B cell (primary cell): ENCODE measurements at regions of chr22 and their contacts with region 1.

Region 1: DNA sequence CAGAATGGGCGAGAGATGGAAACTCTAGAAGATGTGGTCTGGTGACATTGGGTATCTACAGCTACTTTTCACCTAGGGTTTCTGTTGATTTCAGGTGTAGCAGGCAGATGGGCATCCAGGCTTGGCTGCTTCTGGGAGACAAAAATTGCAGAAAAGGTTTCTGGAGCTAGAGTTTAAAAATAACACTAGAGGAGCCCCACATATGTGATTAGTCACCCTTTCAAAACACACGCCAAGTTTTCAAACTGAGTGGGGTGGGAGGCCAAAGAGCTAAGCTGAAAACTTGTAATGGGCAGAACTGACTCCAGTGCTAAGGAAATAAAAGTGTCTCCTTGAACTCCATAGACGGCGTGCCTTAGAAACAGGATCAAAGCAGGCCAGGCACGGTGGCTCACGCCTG is 80.8 kb downstream of the GRK3 start:
- DNase-seq: no peak
- ATAC-seq: no peak
- H3K4me3 ChIP-seq: no peak overlapping the region
- H3K4me3 Mint-ChIP-seq: no peak overlapping the region
- H3K27ac ChIP-seq: peak overlapping the region in 1 of 2 donors; percentile 21
- H3K27ac Mint-ChIP-seq: peak overlapping the region; percentile 32
- H3K4me1 ChIP-seq: peaks cover 30 to 39% of the 10 kb centered on the region in 2 donors
- H3K4me1 Mint-ChIP-seq: peaks cover 62% of the 10 kb centered on the region
- H3K27me3 ChIP-seq: no peaks in the 10 kb centered on the region
- H3K27me3 Mint-ChIP-seq: no peaks in the 10 kb centered on the region
- CTCF ChIP-seq: no peak

Region 2: GRCh38 chr22:25420925-25421904 is 224.1 kb before region 1 on chr22:
- CTCF ChIA-PET with region 1: no interaction called
- POLR2A ChIA-PET with region 1: no interaction called
- intact Hi-C with region 1: no loop called
- DNase-seq: peak; percentile 47
- ATAC-seq: no peak
- H3K4me3 ChIP-seq: peak overlapping the region in 3 of 5 experiments; percentile 26 to 39 (median 36)
- H3K4me3 Mint-ChIP-seq: peak overlapping the region; percentile 87
- H3K27ac ChIP-seq: no peak overlapping the region
- H3K27ac Mint-ChIP-seq: no peak overlapping the region
- H3K4me1 ChIP-seq: peaks cover 38 to 40% of the 10 kb centered on the region in 2 donors
- H3K4me1 Mint-ChIP-seq: peaks cover 34% of the 10 kb centered on the region
- H3K27me3 ChIP-seq: peaks cover 0 to 45% (median 21%) of the 10 kb centered on the region in 4 experiments
- H3K27me3 Mint-ChIP-seq: peaks cover 44% of the 10 kb centered on the region
- CTCF ChIP-seq: no peak

Region 3: GRCh38 chr22:25602916-25603315 is 42.4 kb before region 1 on chr22:
- CTCF ChIA-PET with region 1: interaction called, 3 read pairs
- POLR2A ChIA-PET with region 1: no interaction called
- intact Hi-C with region 1: loop called (anchors 5 kb)
- DNase-seq: no peak
- ATAC-seq: no peak
- H3K4me3 ChIP-seq: no peak overlapping the region
- H3K4me3 Mint-ChIP-seq: no peak overlapping the region
- H3K27ac ChIP-seq: peak overlapping the region in 1 of 2 donors; percentile 30
- H3K27ac Mint-ChIP-seq: no peak overlapping the region
- H3K4me1 ChIP-seq: peaks cover 11 to 25% of the 10 kb centered on the region in 2 donors
- H3K4me1 Mint-ChIP-seq: peaks cover 60% of the 10 kb centered on the region
- H3K27me3 ChIP-seq: no peaks in the 10 kb centered on the region
- H3K27me3 Mint-ChIP-seq: no peaks in the 10 kb centered on the region
- CTCF ChIP-seq: no peak

Region 4: DNA sequence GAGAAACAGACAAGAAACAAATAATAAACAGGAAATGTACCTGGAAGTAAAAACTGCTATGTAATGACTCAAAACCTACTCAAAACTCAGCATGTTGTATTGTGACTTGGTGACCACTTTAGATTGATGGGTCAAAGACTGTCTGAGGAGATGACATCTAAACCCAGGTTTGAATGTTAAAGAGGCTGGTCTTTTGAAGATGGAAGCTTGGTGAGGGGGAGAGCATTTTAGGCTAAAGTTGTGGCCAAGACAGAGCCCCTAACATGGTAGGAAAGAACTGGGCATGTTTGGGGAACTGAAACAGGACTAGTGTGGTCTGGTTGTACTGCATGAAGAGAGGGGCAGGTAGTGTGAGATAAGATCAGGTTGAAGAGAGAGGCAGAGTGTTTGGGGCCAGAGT is 11.5 kb after region 1 on chr22:
- CTCF ChIA-PET with region 1: interaction called, 11 read pairs
- POLR2A ChIA-PET with region 1: no interaction called
- intact Hi-C with region 1: loop called (anchors 2 kb)
- DNase-seq: peak; percentile 74
- ATAC-seq: peak; percentile 100
- H3K4me3 ChIP-seq: no peak overlapping the region
- H3K4me3 Mint-ChIP-seq: peak overlapping the region; percentile 9
- H3K27ac ChIP-seq: peak overlapping the region; percentile 49 to 64
- H3K27ac Mint-ChIP-seq: peak overlapping the region; percentile 69
- H3K4me1 ChIP-seq: peaks cover 19 to 39% of the 10 kb centered on the region in 2 donors
- H3K4me1 Mint-ChIP-seq: peaks cover 74% of the 10 kb centered on the region
- H3K27me3 ChIP-seq: no peaks in the 10 kb centered on the region
- H3K27me3 Mint-ChIP-seq: no peaks in the 10 kb centered on the region
- CTCF ChIP-seq: no peak